ENCODE measurements at regions of chr12 and their contacts with region 1.

Region 1: DNA sequence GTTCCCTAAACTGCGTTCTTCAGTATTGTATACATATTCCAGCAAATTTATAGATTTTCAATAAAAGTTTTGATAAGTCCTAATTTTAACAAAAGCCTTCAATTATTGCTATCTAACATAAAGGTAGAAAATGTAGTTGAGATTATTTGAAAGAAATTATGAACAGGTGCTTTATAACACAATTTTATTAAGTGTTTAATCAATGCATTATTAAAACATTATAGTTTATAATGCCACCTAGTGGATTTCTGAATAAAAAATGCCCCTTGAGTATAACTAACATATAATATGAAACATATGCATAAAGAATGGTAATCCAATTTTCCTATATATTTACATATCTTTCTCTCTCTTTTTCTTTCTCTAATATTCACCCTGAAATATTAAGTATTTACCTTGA is 515.3 kb downstream of the SLC6A15 start:
- DNase-seq: no peak
- H3K4me3 Mint-ChIP-seq: no peak overlapping the region
- H3K27ac Mint-ChIP-seq: no peak overlapping the region
- H3K4me1 Mint-ChIP-seq: no peaks in the 10 kb centered on the region
- H3K27me3 Mint-ChIP-seq: no peaks in the 10 kb centered on the region

Region 2: GRCh38 chr12:83005534-83006197 is 1391.6 kb before region 1 on chr12:
- CTCF ChIA-PET with region 1: no interaction called
- intact Hi-C with region 1: loop called (anchors 2 kb)
- DNase-seq: no peak
- H3K4me3 Mint-ChIP-seq: no peak overlapping the region
- H3K27ac Mint-ChIP-seq: no peak overlapping the region
- H3K4me1 Mint-ChIP-seq: no peaks in the 10 kb centered on the region
- H3K27me3 Mint-ChIP-seq: no peaks in the 10 kb centered on the region

Region 3: DNA sequence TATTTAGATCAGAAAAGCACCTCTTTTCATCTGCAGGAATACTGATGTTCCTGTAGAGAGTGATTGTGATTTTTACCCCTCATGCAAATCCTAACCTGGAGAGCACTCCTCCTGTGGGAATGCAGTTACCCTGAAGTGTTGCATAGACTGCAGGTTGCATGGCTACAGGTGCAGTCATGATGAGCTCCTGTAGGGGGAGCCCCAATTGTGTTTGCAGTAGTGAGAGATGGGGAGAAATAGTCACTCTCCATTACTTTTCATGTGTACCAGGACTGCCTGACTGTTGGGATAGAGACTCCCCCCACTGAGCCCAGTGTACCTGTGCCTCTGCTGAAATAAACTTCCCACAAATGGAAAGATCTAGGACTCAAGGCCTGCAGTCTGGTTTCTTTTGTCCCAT is 571.2 kb before region 1 on chr12:
- CTCF ChIA-PET with region 1: no interaction called
- intact Hi-C with region 1: loop called (anchors 5 kb)
- DNase-seq: peak; percentile 54
- H3K4me3 Mint-ChIP-seq: no peak overlapping the region
- H3K27ac Mint-ChIP-seq: no peak overlapping the region
- H3K4me1 Mint-ChIP-seq: no peaks in the 10 kb centered on the region
- H3K27me3 Mint-ChIP-seq: no peaks in the 10 kb centered on the region